Activated T-helper 2 cell treated with anti-CD3 and anti-CD28 coated beads, Interferon-gamma antibody, Interleukin-2, Interleukin-4, amounts not matched to agents 10 μg/mL and 5 μg/mL and 100 μg/mL, durations not matched to agents 14 hours and 24 hours and 36 hours (primary cell): ENCODE measurements at regions of chr17 and their contacts with region 1.

Region 1: DNA sequence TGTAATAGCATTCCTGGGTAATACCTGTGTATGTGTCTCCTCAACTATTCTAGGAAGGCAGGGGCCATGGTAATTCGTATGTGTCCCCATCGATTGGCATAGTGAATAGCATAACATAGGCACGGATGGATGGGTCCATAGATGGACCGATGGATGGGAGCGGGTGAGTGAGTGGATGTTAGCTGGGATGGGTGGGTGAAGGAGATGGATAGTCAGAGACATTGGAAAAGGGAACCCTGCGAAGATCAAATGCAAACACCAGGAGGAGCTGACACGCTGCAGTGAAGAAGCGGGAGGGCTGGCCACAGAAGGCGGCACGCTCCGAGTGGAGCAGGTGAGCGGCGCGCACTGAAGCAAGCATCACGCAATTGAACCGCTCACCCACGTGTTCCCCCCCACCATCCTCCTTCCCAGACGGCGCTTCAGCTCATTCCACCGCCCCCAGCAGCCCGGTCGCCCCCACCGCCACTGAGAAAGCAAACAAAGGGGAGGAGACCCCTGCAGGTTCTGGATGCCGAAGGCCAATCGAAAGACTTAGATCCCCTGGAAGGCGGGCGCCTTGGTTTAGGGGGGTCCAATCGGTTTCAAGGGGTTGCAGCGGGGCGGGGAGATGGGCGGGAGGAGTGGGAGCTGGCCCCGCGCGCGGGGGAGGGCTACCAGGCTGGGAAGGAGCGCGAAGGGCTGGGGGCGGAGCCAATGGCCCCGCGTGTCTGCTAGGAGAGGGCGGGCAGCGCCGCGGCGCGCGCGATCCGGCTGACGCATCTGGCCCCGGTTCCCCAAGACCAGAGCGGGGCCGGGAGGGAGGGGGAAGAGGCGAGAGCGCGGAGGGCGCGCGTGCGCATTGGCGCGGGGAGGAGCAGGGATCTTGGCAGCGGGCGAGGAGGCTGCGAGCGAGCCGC is at the start of gene ARRB2:
- DNase-seq: peak; percentile 98
- H3K4me3 Mint-ChIP-seq: peak within 1 kb of the TSS; percentile 94
- H3K27ac Mint-ChIP-seq: peak within 1 kb of the TSS; percentile 84
- H3K4me1 Mint-ChIP-seq: peaks cover 43% of the 10 kb centered on the region
- H3K27me3 Mint-ChIP-seq: no peaks in the 10 kb centered on the region
- total RNA-seq, gene ARRB2: 226 and 231 TPM in 2 replicates

Region 2: GRCh38 chr17:4565209-4566141 is 144.6 kb before region 1 on chr17:
- intact Hi-C with region 1: loop called (anchors 10 kb)
- DNase-seq: peak; percentile 39
- H3K4me3 Mint-ChIP-seq: no peak overlapping the region
- H3K27ac Mint-ChIP-seq: peak overlapping the region; percentile 33
- H3K4me1 Mint-ChIP-seq: peaks cover 40% of the 10 kb centered on the region
- H3K27me3 Mint-ChIP-seq: peaks cover 7% of the 10 kb centered on the region

Region 3: DNA sequence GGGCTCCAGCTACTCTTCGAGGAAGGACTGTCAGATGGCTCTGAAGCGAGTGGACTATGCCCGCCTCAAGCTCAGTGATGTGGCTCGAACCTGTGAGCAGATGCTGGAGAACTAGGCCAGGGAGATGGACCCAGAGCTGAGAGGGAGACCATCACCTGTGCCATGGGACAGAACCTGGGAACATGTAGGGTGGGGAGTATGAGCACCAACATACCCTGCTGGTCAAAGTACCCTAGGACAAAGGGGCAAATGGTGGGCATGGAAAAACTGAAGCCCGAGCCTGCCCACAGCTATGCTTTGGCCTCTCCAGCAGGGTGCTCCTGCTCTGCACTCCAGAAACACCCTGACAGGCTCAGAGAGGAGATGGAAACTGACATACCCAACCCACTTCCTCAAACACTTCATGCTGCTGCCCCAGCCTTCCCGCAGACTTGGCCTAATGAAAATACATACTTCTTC is 23.1 kb after region 1 on chr17:
- intact Hi-C with region 1: loop called (anchors 1 kb)
- DNase-seq: no peak
- H3K4me3 Mint-ChIP-seq: no peak overlapping the region
- H3K27ac Mint-ChIP-seq: peak overlapping the region; percentile 60
- H3K4me1 Mint-ChIP-seq: peaks cover 33% of the 10 kb centered on the region
- H3K27me3 Mint-ChIP-seq: peaks cover 6% of the 10 kb centered on the region

Region 4: DNA sequence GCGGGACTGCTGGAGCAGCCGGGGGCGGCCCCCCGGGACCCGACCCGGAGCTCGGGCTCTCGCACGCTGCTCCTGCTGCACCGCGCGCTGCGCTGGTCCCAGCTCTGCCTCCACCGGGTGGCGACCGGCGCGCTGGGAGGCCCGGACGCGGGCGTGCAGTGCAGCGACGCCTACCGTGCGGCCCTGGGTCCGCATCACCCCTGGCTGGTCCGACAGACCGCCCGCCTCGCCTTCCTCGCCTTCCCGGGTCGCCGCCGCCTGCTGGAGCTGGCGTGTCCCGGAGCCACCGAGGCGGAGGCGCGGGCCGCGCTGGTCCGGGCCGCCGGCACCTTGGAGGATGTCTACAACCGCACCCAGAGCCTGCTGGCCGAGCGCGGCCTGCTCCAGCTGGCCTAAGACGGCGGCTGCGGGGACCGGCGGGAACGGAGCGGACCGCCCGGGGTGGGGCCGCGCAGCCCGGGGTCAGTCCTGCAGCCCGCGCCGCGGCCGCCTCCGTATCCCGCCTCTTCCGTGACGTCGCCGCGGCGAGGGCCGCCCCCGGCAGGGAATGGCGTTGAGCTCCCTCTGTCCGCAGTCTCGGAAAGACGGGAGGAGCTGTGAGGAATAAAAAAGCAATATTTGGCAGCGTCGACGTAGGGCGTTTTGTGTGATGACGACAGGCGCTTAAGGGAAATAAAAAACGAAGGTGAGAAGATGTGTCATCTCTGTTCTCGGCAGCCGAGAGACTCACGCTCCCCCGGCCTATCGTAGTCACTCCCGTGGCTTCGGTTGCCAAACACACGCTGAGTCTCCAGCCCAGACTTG is 80.1 kb after region 1 on chr17:
- intact Hi-C with region 1: loop called (anchors 1 kb)
- DNase-seq: peak; percentile 82
- H3K4me3 Mint-ChIP-seq: peak overlapping the region; percentile 90
- H3K27ac Mint-ChIP-seq: peak overlapping the region; percentile 94
- H3K4me1 Mint-ChIP-seq: peaks cover 21% of the 10 kb centered on the region
- H3K27me3 Mint-ChIP-seq: peaks cover 39% of the 10 kb centered on the region

Region 5: GRCh38 chr17:4903051-4903818 is 193.2 kb after region 1 on chr17 and contains the start of gene CHRNE:
- intact Hi-C with region 1: loop called (anchors 10 kb)
- DNase-seq: peak; percentile 65
- H3K4me3 Mint-ChIP-seq: peak within 1 kb of the TSS; percentile 19
- H3K27ac Mint-ChIP-seq: peak within 1 kb of the TSS; percentile 43
- H3K4me1 Mint-ChIP-seq: peaks cover 25% of the 10 kb centered on the region
- H3K27me3 Mint-ChIP-seq: peaks cover 2% of the 10 kb centered on the region
- total RNA-seq, gene CHRNE: 0.32 and 0.44 TPM in 2 replicates

Region 6: DNA sequence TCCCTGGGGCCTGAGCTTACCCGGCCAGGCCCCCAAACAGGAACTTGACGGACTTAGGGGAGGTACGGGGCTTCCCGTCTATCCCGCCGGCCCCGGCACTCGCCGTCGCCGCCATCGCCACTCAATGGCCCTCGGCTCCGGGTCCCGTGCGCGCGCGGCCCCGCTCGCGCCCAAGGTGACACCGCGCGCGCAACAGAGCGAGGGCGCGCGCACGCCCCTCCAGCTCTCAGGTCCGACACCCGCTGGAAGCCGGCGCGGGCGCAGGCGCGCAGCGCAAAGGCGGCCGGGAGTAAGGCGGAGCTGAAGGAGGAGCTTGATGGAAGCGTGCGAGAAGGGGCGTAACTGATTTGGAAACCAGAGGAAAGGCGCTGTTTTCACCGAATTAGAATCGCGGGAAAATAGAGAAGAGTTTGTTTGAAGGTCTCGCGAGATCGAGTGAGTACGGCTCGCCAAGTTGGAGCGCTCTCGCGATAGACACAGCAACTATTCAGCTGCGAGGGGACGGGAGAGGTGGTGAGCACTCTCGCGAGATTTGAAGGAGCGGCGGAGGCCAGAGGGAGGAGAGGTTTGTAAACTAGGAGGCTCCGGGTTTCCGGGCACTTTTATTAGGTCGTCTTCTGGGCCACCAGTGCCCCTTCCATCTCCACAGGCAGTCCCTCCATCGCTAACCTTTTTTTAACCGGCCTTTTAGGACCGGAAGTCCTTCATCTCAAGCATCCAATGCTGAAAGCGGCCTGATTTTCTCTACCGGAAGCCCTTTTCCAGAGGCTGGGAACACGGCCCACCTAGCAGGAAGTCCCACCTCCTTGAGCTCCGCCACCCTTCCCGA is 230.0 kb after region 1 on chr17 and contains the starts of genes RNF167 and SLC25A11:
- intact Hi-C with region 1: loop called (anchors 2 kb)
- DNase-seq: peak; percentile 98
- H3K4me3 Mint-ChIP-seq: peak within 1 kb of the TSS; percentile 100
- H3K27ac Mint-ChIP-seq: peak within 1 kb of the TSS; percentile 87
- H3K4me1 Mint-ChIP-seq: peaks cover 48% of the 10 kb centered on the region
- H3K27me3 Mint-ChIP-seq: no peaks in the 10 kb centered on the region
- total RNA-seq, gene RNF167: 112 and 126 TPM in 2 replicates
- total RNA-seq, gene SLC25A11: 91.4 and 103 TPM in 2 replicates

Region 7: GRCh38 chr17:4948931-4949320 is 238.9 kb after region 1 on chr17:
- intact Hi-C with region 1: loop called (anchors 2 kb)
- DNase-seq: no peak
- H3K4me3 Mint-ChIP-seq: peak overlapping the region; percentile 100
- H3K27ac Mint-ChIP-seq: peak overlapping the region; percentile 100
- H3K4me1 Mint-ChIP-seq: peaks cover 37% of the 10 kb centered on the region
- H3K27me3 Mint-ChIP-seq: no peaks in the 10 kb centered on the region